Thyroid gland (tissue), 4 donors: ENCODE measurements at regions of chr18 and their contacts with region 1.

Region 1: GRCh38 chr18:57803103-57803969 is at the start of gene ATP8B1:
- DNase-seq: peak; percentile 99
- H3K4me3 ChIP-seq: peak within 1 kb of the TSS; percentile 34 to 88 (median 84)
- H3K27ac ChIP-seq: peak within 1 kb of the TSS; percentile 95 to 97 (median 95)
- H3K4me1 ChIP-seq: peaks cover 53 to 63% of the 10 kb centered on the region in 2 donors
- H3K27me3 ChIP-seq: no peaks in the 10 kb centered on the region
- CTCF ChIP-seq: peak in 2 of 6 experiments; percentile 25 to 36
- POLR2A ChIP-seq: peak; percentile 62 to 92
- total RNA-seq, gene ATP8B1: 45.8 to 71.8 (median 58.2) TPM

Region 2: GRCh38 chr18:57621246-57621604 is 182.1 kb before region 1 on chr18:
- intact Hi-C with region 1: loop called (anchors 10 kb)
- DNase-seq: no peak
- H3K4me3 ChIP-seq: peak overlapping the region; percentile 83 to 96 (median 91)
- H3K27ac ChIP-seq: peak overlapping the region; percentile 79 to 83 (median 83)
- H3K4me1 ChIP-seq: peaks cover 6 to 18% of the 10 kb centered on the region in 2 donors
- H3K27me3 ChIP-seq: no peaks in the 10 kb centered on the region
- CTCF ChIP-seq: no peak
- POLR2A ChIP-seq: no peak

Region 3: DNA sequence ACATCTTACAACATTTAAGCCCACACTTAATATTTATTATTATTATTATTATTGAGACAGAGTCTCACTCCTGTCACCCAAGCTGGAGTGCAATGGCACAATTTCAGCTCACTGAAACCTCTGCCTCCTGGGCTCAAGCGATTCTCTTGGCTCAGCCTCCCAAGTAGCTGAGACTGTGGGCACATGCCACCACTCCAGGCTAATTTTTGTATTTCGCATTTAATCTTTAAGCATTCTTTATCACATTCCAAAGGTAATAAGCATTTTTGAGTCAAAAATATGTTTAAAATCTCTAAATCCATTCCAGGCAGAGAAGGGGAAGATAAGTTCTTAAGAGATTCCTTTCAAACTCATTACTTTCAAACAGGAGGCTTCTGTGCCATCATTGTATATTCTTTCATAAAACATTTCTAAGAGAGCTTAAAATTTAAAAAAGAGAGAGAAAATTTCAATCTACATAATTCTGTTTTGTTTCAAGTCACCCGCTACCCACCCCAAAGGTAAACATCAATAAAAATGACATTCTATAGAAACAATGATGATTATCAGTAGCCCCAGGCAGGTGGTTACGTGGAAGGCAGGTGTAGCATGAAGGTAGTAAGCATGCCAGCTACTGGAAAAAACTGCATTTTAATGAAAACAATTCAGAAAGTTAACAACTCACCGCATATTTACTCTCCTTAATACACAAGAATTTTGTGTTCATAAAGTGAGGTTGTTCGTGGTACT is 97.3 kb before region 1 on chr18:
- intact Hi-C with region 1: loop called (anchors 10 kb)
- DNase-seq: no peak
- H3K4me3 ChIP-seq: no peak overlapping the region
- H3K27ac ChIP-seq: no peak overlapping the region
- H3K4me1 ChIP-seq: peaks cover 15 to 16% of the 10 kb centered on the region in 2 donors
- H3K27me3 ChIP-seq: no peaks in the 10 kb centered on the region
- CTCF ChIP-seq: no peak
- POLR2A ChIP-seq: no peak